Gastrocnemius medialis (tissue), 4 donors: ENCODE measurements at regions of chr1 and their contacts with region 1.

Region 1: DNA sequence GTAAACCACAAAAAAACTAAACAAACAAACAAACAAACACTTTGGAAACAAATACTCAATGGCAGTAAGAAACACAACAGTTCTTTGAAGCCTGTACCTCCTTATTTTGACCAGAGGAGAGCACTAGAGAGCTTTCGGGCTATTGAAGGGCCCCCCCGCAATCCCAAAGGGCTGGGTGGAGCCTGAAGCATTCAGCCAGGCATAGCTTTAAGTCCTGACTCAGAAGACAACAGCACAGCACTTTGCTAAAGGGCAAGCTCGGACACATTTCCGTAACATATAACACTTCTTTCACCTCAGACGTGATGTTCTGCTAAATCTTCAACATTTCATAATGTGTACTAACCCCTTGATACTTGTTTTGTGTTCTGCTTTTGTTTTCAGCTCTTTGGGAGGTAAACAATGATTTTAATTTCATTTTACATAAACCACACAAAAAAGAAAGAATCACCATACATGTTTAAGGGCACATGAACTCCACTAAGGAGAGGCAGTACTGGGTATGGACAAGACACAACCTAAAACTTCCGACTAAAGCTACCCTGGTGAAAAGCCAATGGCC is 9.7 kb upstream of the SHCBP1L start:
- DNase-seq: peak; percentile 81 to 85
- ATAC-seq: peak; percentile 100
- H3K4me3 ChIP-seq: peak overlapping the region; percentile 30 to 42 (median 40)
- H3K27ac ChIP-seq: peak overlapping the region; percentile 72 to 79 (median 74)
- H3K4me1 ChIP-seq: peaks cover 3% of the 10 kb centered on the region in 2 donors
- H3K27me3 ChIP-seq: no peaks in the 10 kb centered on the region
- CTCF ChIP-seq: peak; percentile 85 to 97 (median 94)
- POLR2A ChIP-seq: peak; percentile 14 to 71

Region 2: DNA sequence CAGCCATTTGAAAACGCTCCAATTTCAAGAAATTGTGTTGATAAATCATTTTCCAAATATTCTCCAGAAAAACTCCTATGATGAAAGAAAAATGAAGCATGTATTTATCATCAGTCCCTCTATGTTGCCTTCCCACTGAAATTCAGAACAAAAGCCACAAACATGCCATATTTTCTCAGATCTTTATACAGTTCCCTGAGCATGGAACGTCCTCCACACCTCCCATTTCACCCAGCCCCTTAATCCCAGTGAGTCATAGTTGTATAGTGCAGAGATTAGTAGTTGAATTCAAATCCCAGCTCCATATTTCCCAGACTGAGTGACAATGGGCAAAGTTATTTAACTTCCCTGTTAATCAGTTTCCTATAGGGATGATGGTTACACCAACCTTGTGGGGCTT is 193.7 kb before region 1 on chr1:
- in situ Hi-C with region 1: no loop called
- intact Hi-C with region 1: no loop called
- DNase-seq: no peak
- ATAC-seq: no peak
- H3K4me3 ChIP-seq: no peak overlapping the region
- H3K27ac ChIP-seq: no peak overlapping the region
- H3K4me1 ChIP-seq: peaks cover 14 to 16% of the 10 kb centered on the region in 2 donors
- H3K27me3 ChIP-seq: no peaks in the 10 kb centered on the region
- CTCF ChIP-seq: no peak
- POLR2A ChIP-seq: no peak

Region 3: DNA sequence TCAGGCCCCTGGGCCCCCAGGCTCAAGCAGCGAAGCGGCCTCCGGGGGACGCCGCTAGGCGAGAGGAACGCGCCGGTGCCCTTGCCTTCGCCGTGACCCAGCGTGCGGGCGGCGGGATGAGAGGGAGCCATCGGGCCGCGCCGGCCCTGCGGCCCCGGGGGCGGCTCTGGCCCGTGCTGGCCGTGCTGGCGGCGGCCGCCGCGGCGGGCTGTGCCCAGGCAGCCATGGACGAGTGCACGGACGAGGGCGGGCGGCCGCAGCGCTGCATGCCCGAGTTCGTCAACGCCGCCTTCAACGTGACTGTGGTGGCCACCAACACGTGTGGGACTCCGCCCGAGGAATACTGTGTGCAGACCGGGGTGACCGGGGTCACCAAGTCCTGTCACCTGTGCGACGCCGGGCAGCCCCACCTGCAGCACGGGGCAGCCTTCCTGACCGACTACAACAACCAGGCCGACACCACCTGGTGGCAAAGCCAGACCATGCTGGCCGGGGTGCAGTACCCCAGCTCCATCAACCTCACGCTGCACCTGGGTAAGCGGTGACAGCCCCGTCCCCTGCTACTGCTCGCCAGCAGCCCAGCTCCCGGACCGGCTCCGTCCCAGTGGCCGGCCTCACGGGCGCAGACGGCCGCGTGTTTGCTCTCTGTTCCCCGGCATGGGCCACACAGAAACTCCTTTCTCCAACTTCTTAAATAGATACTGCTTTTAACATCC is 61.1 kb after region 1 on chr1:
- in situ Hi-C with region 1: loop called in 3 of 4 experiments (anchors 5 to 10 kb)
- intact Hi-C with region 1: loop called (anchors 1 kb)
- DNase-seq: peak; percentile 85
- ATAC-seq: peak; percentile 57 to 61
- H3K4me3 ChIP-seq: peak overlapping the region; percentile 76 to 91 (median 85)
- H3K27ac ChIP-seq: peak overlapping the region; percentile 94 to 100 (median 98)
- H3K4me1 ChIP-seq: peaks cover 48 to 64% of the 10 kb centered on the region in 2 donors
- H3K27me3 ChIP-seq: no peaks in the 10 kb centered on the region
- CTCF ChIP-seq: peak; percentile 62 to 81 (median 78)
- POLR2A ChIP-seq: peak; percentile 46 to 60

Region 4: DNA sequence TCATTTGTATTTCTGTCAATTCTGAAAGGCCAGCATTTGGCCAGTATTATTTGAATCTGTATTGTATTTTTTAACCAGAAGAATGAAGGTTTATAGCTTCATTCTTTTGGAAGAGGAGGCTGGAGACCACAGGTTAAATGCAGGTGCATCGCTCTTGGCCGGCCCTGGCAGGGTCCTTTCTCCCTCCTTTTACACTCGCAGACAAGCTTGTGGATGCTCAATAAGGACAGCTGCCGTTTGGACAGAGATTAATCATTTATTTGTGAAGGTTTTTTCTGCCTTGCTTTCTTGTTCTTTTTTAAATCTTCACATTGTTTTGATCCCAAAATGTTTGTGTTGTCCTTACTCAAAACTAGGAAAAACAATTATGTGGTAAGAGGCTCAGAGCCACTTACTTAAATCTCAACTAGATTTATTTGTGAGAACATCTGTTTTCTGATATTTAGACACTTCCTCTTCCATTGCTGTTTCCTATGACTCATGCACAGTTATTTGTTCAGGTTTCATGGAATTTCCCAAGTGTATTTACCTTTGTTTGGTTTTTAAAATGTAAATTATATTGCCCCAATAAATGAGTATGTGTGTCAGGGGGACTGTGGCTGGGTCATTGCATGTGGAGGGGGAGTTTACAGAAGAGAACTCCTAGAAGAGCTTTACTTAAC is 176.8 kb after region 1 on chr1:
- in situ Hi-C with region 1: no loop called
- intact Hi-C with region 1: loop called (anchors 10 kb)
- DNase-seq: no peak
- ATAC-seq: peak; percentile 29 to 31
- H3K4me3 ChIP-seq: no peak overlapping the region
- H3K27ac ChIP-seq: peak overlapping the region; percentile 62 to 76 (median 70)
- H3K4me1 ChIP-seq: peaks cover 11 to 18% of the 10 kb centered on the region in 2 donors
- H3K27me3 ChIP-seq: no peaks in the 10 kb centered on the region
- CTCF ChIP-seq: no peak
- POLR2A ChIP-seq: no peak

Region 5: DNA sequence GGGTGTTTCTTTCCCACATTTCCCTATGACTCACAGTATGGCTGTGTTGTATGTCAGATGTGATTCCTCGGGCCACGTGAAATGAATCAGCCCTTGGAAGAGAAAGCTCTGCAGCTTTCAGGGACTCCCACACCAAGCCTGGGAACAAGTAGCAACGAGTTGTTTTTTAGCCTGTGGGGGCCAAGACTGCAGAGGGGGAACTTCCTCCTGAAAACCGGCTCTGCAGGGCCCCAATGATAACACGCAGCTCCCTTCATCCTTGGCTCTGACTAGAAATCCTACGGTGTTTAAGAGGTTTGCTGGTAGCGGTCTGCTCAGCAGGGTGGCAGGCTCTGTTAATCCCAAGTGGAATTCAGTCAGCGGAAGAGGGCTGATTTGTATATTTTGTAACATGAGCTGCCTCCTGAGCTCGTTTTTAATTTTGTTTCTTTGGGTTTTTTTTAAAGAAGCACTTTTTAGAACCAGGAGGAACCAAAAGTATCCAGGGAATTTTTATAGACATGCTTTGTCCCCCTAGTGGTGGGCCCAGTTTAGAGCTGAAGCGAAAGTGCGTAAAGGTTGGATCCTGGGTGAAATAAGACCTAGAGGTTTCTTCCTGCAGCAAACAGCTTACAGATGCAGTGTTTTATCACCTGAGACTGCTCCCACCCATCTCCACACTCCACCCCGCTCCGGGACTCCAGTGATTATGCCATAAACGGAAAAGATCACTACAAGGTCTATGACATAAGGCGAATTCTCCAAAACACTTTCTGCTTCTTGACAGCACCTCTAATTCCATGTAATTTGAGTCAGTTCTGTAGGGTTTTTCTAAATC is 272.2 kb after region 1 on chr1:
- in situ Hi-C with region 1: loop called in 3 of 4 experiments (anchors 10 to 25 kb)
- intact Hi-C with region 1: loop called (anchors 1 kb)
- DNase-seq: peak; percentile 79 to 83
- ATAC-seq: peak; percentile 97 to 98
- H3K4me3 ChIP-seq: peak overlapping the region; percentile 41 to 53 (median 48)
- H3K27ac ChIP-seq: peak overlapping the region; percentile 73 to 83 (median 78)
- H3K4me1 ChIP-seq: peaks cover 12 to 17% of the 10 kb centered on the region in 2 donors
- H3K27me3 ChIP-seq: no peaks in the 10 kb centered on the region
- CTCF ChIP-seq: peak; percentile 59 to 81 (median 69)
- POLR2A ChIP-seq: peak; percentile 10 to 42

Region 6: GRCh38 chr1:183318433-183318832 is 355.8 kb after region 1 on chr1:
- in situ Hi-C with region 1: no loop called
- intact Hi-C with region 1: loop called (anchors 5 kb)
- DNase-seq: peak; percentile 66 to 72
- ATAC-seq: peak; percentile 96 to 97
- H3K4me3 ChIP-seq: no peak overlapping the region
- H3K27ac ChIP-seq: peak overlapping the region; percentile 58 to 69 (median 60)
- H3K4me1 ChIP-seq: peaks cover 0 to 8% of the 10 kb centered on the region in 2 donors
- H3K27me3 ChIP-seq: no peaks in the 10 kb centered on the region
- CTCF ChIP-seq: peak in 4 of 5 experiments; percentile 39 to 53 (median 46)
- POLR2A ChIP-seq: no peak